WTC11 (cell line): ENCODE measurements at regions of chr16 and their contacts with region 1.

Region 1: DNA sequence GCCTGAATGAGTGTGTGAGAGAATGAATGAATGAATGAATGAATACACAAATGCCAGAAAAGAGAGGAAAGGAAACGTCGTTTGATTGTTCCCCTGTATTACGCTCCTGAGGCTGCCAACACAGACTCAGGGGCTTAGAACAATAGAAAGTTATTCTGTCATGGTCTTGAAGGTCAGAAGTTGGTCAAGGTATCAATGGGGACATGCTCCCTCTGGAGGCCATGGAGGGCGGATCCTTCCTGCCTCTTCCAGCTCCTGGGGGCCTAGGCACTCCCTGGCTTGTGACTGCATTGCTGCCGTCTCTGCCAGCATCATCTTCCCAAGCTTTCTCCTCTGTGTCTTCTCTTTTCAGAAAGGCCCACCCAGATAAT is 1.5 kb upstream of the SLC38A8 start:
- DNase-seq: peak; percentile 54
- ATAC-seq: peak; percentile 60
- H3K4me3 Mint-ChIP-seq: no peak overlapping the region
- H3K27ac Mint-ChIP-seq: no peak overlapping the region
- H3K4me1 Mint-ChIP-seq: peaks cover 17% of the 10 kb centered on the region
- H3K27me3 Mint-ChIP-seq: no peaks in the 10 kb centered on the region
- CTCF ChIP-seq: peak; percentile 20; the same call in 1 of the 2 replicates

Region 2: DNA sequence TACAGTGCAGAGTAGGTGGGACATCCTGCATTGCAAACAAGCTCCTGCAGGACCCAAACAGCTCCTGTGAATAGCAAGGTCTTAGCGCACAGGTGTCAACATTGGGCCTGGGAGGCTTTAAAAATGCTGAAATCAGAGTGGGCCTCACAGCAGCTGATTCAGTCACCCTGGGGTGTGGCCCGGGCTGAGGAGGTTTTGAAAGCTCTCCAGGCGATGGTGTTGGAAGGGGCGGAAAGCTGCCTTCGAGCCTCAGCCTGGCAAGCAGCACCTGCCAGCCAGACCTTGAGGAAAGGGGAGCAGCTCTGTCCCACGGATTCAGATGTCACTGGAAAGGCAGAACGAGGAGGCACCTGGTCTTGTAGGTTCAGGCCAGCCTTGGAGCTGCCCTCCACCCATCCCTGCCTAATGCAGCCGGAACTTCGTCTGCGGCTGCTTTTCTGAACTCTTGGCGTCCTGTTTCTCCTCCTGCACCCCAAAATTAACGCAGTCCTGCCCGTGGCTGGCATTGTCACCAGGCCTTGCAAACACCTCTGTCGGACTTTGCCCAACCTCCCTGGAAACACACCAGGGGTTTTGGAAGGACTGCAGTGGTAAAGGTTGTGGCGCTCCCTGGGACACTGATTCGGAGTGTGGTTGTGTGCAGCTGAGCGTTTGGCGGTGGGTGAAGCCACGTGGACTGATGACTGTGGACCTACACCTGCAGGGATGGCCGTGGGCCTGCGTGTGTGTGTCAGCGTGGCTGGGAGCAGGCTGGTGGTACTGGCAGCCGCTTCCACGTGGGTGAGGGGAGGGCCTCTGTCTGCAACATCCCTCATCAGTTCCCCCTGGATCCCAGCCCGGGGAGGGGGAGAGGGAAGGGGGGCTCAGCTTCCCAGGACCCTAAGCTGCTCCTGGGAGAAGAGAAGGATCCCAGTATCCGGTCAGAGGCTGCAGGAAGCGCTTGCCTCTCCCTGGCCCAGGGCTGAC is 72.7 kb before region 1 on chr16:
- CTCF ChIA-PET with region 1: interaction called, 36 read pairs
- POLR2A ChIA-PET with region 1: no interaction called
- DNase-seq: no peak
- ATAC-seq: no peak
- H3K4me3 Mint-ChIP-seq: no peak overlapping the region
- H3K27ac Mint-ChIP-seq: no peak overlapping the region
- H3K4me1 Mint-ChIP-seq: peaks cover 7% of the 10 kb centered on the region
- H3K27me3 Mint-ChIP-seq: peaks cover 12% of the 10 kb centered on the region
- CTCF ChIP-seq: no peak

Region 3: GRCh38 chr16:83994087-83994486 is 50.0 kb before region 1 on chr16:
- CTCF ChIA-PET with region 1: interaction called, 23 read pairs
- POLR2A ChIA-PET with region 1: no interaction called
- DNase-seq: no peak
- ATAC-seq: no peak
- H3K4me3 Mint-ChIP-seq: no peak overlapping the region
- H3K27ac Mint-ChIP-seq: no peak overlapping the region
- H3K4me1 Mint-ChIP-seq: peaks cover 6% of the 10 kb centered on the region
- H3K27me3 Mint-ChIP-seq: no peaks in the 10 kb centered on the region
- CTCF ChIP-seq: no peak

Region 4: GRCh38 chr16:84075376-84075775 is 31.3 kb after region 1 on chr16:
- CTCF ChIA-PET with region 1: no interaction called
- POLR2A ChIA-PET with region 1: no interaction called
- DNase-seq: no peak
- ATAC-seq: no peak
- H3K4me3 Mint-ChIP-seq: no peak overlapping the region
- H3K27ac Mint-ChIP-seq: no peak overlapping the region
- H3K4me1 Mint-ChIP-seq: no peaks in the 10 kb centered on the region
- H3K27me3 Mint-ChIP-seq: no peaks in the 10 kb centered on the region
- CTCF ChIP-seq: no peak

Region 5: GRCh38 chr16:84136331-84137125 is 92.4 kb after region 1 on chr16:
- CTCF ChIA-PET with region 1: no interaction called
- POLR2A ChIA-PET with region 1: no interaction called
- DNase-seq: no peak
- ATAC-seq: no peak
- H3K4me3 Mint-ChIP-seq: no peak overlapping the region
- H3K27ac Mint-ChIP-seq: peak overlapping the region; percentile 86
- H3K4me1 Mint-ChIP-seq: peaks cover 57% of the 10 kb centered on the region
- H3K27me3 Mint-ChIP-seq: no peaks in the 10 kb centered on the region
- CTCF ChIP-seq: no peak